CD4-positive, alpha-beta memory T cell (primary cell): ENCODE measurements at regions of chr5 and their contacts with region 1.

Region 1: GRCh38 chr5:108642167-108642906 is 105.4 kb upstream of the FER start:
- DNase-seq: peak; percentile 28 to 58 (median 43)
- H3K4me3 ChIP-seq: no peak overlapping the region
- H3K4me3 Mint-ChIP-seq: peak overlapping the region in 1 of 8 donors; percentile 37
- H3K27ac ChIP-seq: no peak overlapping the region
- H3K27ac Mint-ChIP-seq: peak overlapping the region in 2 of 7 donors; percentile 5 to 31
- H3K4me1 ChIP-seq: no peaks in the 10 kb centered on the region
- H3K4me1 Mint-ChIP-seq: peaks cover 0 to 4% (median 3%) of the 10 kb centered on the region in 4 donors
- H3K27me3 ChIP-seq: no peaks in the 10 kb centered on the region
- H3K27me3 Mint-ChIP-seq: peaks cover 1 to 11% of the 10 kb centered on the region in 2 donors

Region 2: GRCh38 chr5:110625376-110625999 is 1983.2 kb after region 1 on chr5:
- CTCF ChIA-PET with region 1: no interaction called
- POLR2A ChIA-PET with region 1: no interaction called
- intact Hi-C with region 1: loop called (anchors 2 kb)
- DNase-seq: peak in 3 of 5 donors; percentile 19 to 35 (median 26)
- H3K4me3 ChIP-seq: no peak overlapping the region
- H3K4me3 Mint-ChIP-seq: no peak overlapping the region
- H3K27ac ChIP-seq: no peak overlapping the region
- H3K27ac Mint-ChIP-seq: no peak overlapping the region
- H3K4me1 ChIP-seq: no peaks in the 10 kb centered on the region
- H3K4me1 Mint-ChIP-seq: no peaks in the 10 kb centered on the region
- H3K27me3 ChIP-seq: no peaks in the 10 kb centered on the region
- H3K27me3 Mint-ChIP-seq: peaks cover 2 to 4% of the 10 kb centered on the region in 2 donors